Right ventricle myocardium inferior (tissue), 1 donor: ENCODE measurements at regions of chr9 and their contacts with region 1.

Region 1: GRCh38 chr9:72526901-72527800 is 5.7 kb downstream of the TMC1 start:
- DNase-seq: peak; percentile 76
- ATAC-seq: peak; percentile 92

Region 2: DNA sequence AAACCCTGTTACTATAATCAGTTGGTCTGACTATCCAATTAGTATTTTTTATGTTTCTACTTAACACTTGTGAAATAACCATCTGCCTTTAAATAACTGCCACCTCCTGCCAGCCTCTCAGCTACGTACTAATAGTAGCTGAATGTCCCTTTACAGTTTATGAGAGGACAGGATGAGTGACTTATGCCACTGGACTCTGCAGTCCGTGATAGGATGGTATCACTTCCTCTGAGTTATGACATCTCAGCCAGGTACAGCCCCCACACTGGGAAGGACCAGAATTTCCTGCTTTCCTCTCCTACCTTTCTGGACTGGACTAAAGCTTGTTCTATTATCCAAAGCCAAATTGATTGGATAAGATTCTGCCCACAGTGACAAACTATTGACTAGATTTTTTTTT is 265.1 kb before region 1 on chr9:
- intact Hi-C with region 1: no loop called
- DNase-seq: no peak
- ATAC-seq: no peak

Region 3: DNA sequence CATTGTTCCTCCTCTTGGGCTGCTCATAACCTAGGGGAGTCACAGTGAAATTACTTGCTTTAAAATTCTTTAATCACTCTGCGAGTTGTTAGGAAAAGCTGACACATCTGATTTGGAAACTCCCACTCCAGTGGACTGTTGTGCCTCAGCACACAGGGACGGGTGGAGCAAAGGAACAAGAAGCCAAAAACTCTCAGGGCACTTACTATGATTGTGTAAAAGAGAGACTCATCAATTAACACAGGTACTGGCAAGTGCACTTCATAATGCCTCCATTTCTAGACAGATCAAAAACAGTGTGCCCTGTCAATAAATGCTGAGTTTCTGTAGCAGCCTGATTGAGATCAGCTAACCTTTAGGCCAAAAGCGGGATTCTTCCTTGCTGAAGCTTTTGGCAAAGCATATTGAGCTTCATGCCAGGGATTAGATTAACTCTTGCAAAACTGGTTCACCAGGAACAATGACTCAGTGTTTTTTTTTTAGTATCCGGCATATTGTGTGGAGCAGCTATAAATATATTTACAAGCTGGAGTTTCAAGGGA is 50.1 kb after region 1 on chr9:
- intact Hi-C with region 1: loop called (anchors 5 kb)
- DNase-seq: no peak
- ATAC-seq: peak; percentile 75

Region 4: DNA sequence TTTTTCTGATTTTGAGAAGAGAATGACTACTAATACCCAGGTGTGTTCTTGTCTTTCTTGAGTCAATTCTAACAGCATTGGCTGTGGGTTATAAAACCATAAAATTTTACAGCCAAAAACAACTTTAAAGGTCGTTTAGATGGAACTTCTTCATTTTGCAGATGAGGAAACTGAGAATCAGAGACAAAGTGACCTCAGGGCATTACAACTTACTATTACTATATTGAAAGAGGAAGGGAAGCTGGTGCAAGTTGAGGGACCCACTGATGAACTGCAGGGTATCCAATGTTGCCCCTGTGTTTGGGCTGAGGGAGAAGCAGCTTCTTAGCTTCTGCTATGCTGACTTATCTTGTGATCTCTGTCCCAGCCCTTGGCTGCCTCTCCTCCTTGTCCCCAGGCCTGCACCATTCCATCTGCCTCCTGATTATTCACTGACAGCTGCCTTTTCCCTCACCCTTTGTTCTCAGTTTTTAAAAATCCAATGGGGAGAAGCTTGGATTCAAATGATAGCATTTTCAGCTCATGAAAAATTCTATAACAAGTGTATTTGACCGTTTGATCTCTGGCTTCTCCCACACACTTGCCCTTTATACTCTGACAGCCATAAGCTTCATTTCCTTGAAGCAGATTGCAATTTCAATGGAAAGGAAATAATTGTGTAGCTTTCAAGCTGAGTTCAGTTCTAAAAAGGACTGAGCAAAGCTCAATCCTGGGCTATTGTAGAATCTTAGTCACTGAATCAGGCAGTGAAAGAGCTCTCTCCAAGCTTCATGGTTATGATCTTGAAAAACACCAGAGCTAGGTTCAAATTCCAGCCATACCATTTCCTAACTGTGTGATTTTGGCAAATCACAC is 62.7 kb after region 1 on chr9:
- intact Hi-C with region 1: no loop called
- DNase-seq: no peak
- ATAC-seq: no peak